ENCODE measurements at regions of chr6 and their contacts with region 1.

Region 1: GRCh38 chr6:1609648-1610496 is at the start of gene FOXC1:
- DNase-seq: peak; percentile 97
- H3K4me3 ChIP-seq: peak within 1 kb of the TSS; percentile 69 to 89 (median 87)
- H3K27ac ChIP-seq: peak within 1 kb of the TSS; percentile 70
- H3K4me1 ChIP-seq: no peaks in the 10 kb centered on the region
- H3K27me3 ChIP-seq: peaks cover 10 to 13% of the 10 kb centered on the region in 2 experiments
- CTCF ChIP-seq: no peak
- POLR2A ChIP-seq: peak; percentile 88
- total RNA-seq, gene FOXC1: 15.9 and 16.4 TPM in 2 replicates

Region 2: DNA sequence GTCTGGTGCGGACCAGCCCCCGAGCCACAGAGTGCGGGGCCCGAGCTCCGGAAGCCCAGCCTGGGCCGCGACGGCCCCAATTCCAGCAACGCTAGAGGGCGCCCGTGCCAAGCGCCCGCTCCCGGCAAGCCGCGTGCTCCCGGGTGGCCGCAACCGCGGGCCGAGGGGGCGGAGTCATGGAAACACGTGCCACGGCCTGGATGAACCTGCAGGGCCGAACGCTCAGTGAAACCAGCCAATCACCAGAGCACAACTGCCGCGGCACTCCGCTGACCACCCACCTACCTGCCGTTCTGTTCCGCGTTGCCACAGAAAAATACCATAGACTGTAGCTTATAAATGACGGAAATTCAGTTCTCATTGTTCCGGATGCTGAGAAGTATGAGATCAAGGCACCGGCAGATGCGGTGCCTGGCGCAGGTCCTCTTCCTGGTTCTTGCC is 85.8 kb before region 1 on chr6:
- CTCF ChIA-PET with region 1: no interaction called
- POLR2A ChIA-PET with region 1: no interaction called
- dilution Hi-C with region 1: no loop called
- intact Hi-C with region 1: no loop called
- DNase-seq: peak; percentile 58
- H3K4me3 ChIP-seq: no peak overlapping the region
- H3K27ac ChIP-seq: no peak overlapping the region
- H3K4me1 ChIP-seq: no peaks in the 10 kb centered on the region
- H3K27me3 ChIP-seq: peaks cover 0 to 5% of the 10 kb centered on the region in 2 experiments
- CTCF ChIP-seq: peak; percentile 76 to 83
- POLR2A ChIP-seq: no peak

Region 3: DNA sequence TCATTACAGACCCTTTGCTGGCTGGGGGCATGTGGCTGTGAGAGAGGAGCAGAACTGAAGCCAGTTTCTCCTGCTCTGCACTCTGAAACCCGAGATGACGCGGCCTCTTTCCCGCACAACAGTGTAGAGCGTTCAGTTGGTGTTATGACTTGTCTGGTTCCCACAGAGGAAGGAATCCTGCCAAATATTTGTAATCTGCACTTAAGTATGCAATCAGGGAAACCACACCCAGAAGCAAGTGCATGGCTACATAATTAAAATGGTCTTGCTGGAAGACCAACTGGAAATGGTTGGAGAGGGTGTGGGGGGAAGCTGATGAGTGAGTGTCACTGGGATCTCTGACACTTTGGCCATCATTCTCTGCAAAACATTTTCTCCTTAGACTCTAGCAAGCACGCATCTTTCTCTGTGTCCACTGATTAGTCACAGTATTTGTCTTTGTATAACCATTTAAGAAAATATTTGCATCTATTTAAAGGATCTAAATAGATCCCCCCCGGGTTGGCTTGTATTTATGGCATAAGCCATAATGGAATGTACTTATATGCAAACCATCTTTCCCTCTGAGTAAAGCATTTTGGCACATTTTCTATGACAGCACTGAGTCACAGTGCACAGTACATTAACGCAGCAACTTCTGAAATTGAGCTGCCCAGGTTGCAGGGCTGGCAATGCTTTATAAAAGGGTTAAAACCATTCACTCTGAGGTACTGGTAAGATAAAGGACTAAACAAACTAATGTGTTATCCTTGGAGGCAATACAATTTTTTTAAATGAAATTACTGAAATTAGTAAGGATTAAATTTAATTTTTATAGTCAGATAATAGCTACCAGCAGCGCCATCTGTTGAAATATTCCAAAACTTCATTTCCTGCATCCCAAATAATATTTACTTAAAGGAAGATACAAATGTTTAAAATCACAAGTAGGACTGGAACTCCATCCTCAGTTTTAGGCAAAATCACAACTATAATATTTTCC is 76.5 kb after region 1 on chr6:
- CTCF ChIA-PET with region 1: interaction called, 28 read pairs
- POLR2A ChIA-PET with region 1: no interaction called
- dilution Hi-C with region 1: no loop called
- intact Hi-C with region 1: loop called (anchors 2 kb)
- DNase-seq: peak; percentile 71
- H3K4me3 ChIP-seq: no peak overlapping the region
- H3K27ac ChIP-seq: no peak overlapping the region
- H3K4me1 ChIP-seq: peaks cover 13% of the 10 kb centered on the region
- H3K27me3 ChIP-seq: no peaks in the 10 kb centered on the region
- CTCF ChIP-seq: peak; percentile 12 to 26
- POLR2A ChIP-seq: no peak

Region 4: DNA sequence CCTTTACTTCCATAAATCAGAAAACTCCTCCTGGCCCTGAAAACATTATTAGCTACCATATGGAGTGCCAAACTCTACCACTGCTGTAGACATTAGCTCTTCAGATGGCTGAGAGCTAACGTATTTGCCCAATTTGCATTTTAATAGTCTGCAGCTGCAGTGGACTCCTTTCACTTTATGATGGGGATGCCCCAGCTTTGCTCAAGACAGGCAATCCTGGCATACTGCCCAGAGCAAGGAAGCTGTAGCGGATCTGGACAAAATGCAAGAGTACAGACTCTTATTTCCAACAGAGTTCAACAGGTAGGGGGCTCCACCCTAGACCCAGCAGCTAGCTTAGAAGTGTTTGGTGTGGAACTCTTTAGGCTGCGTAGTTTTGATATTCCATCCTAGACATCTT is 246.5 kb after region 1 on chr6:
- CTCF ChIA-PET with region 1: no interaction called
- POLR2A ChIA-PET with region 1: no interaction called
- dilution Hi-C with region 1: no loop called
- intact Hi-C with region 1: no loop called
- DNase-seq: peak; percentile 21
- H3K4me3 ChIP-seq: no peak overlapping the region
- H3K27ac ChIP-seq: no peak overlapping the region
- H3K4me1 ChIP-seq: no peaks in the 10 kb centered on the region
- H3K27me3 ChIP-seq: no peaks in the 10 kb centered on the region
- CTCF ChIP-seq: no peak
- POLR2A ChIP-seq: no peak

Region 5: GRCh38 chr6:1903780-1904465 is 294.1 kb after region 1 on chr6:
- CTCF ChIA-PET with region 1: no interaction called
- POLR2A ChIA-PET with region 1: no interaction called
- dilution Hi-C with region 1: no loop called
- intact Hi-C with region 1: loop called (anchors 2 kb)
- DNase-seq: peak; percentile 72
- H3K4me3 ChIP-seq: no peak overlapping the region
- H3K27ac ChIP-seq: peak overlapping the region; percentile 5
- H3K4me1 ChIP-seq: peaks cover 18% of the 10 kb centered on the region
- H3K27me3 ChIP-seq: no peaks in the 10 kb centered on the region
- CTCF ChIP-seq: no peak
- POLR2A ChIP-seq: no peak

Region 6: GRCh38 chr6:2353412-2354137 is 743.7 kb after region 1 on chr6:
- CTCF ChIA-PET with region 1: interaction called, 25 read pairs
- POLR2A ChIA-PET with region 1: no interaction called
- dilution Hi-C with region 1: no loop called
- intact Hi-C with region 1: no loop called
- DNase-seq: peak; percentile 92
- H3K4me3 ChIP-seq: peak overlapping the region in 1 of 3 experiments; percentile 6
- H3K27ac ChIP-seq: no peak overlapping the region
- H3K4me1 ChIP-seq: peaks cover 6% of the 10 kb centered on the region
- H3K27me3 ChIP-seq: no peaks in the 10 kb centered on the region
- CTCF ChIP-seq: peak; percentile 64 to 66
- POLR2A ChIP-seq: no peak

Region 7: DNA sequence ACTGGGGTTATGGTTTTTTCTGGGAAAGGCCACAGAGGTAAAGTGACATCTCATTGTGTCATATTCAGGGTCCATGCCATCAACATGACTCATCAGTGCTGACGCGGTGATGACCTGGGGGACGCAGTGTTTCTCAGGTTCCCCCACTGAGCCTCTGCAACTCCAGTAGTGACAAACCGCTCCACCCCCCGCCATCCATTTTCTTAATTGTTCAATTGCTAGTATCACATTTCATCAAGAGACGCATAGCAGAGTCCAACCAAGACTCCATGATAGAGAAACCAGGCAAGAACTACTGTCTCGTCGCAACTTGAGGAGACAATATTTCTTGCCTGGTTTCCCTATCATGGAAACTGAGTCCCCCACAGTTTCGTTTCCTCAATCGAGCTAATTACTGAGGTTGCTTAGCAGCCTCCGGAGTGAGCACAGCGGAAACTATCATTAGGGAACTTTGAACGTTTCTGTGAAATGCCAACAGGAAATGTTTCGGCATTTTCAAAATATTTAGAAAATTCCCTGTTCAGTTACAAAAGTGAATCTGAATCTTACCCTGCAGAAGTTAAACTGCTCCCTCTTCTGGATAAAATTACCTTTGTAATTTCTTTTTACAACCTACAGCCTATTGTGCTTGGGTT is 1244.0 kb after region 1 on chr6:
- CTCF ChIA-PET with region 1: no interaction called
- POLR2A ChIA-PET with region 1: no interaction called
- dilution Hi-C with region 1: no loop called
- intact Hi-C with region 1: loop called (anchors 10 kb)
- DNase-seq: peak; percentile 85
- H3K4me3 ChIP-seq: peak overlapping the region in 1 of 3 experiments; percentile 57
- H3K27ac ChIP-seq: peak overlapping the region; percentile 96
- H3K4me1 ChIP-seq: peaks cover 68% of the 10 kb centered on the region
- H3K27me3 ChIP-seq: no peaks in the 10 kb centered on the region
- CTCF ChIP-seq: peak; percentile 11 to 30
- POLR2A ChIP-seq: no peak